ENCODE measurements at regions of chr1 and their contacts with region 1.

Region 1: GRCh38 chr1:241611063-241611462 is 29.1 kb downstream of the CHML start:
- DNase-seq: peak in 7 of 9 donors; percentile 34 to 72 (median 59)
- ATAC-seq: peak; percentile 87
- H3K4me3 ChIP-seq: no peak overlapping the region
- H3K4me3 Mint-ChIP-seq: no peak overlapping the region
- H3K27ac ChIP-seq: no peak overlapping the region
- H3K27ac Mint-ChIP-seq: no peak overlapping the region
- H3K4me1 ChIP-seq: peaks cover 0 to 3% of the 10 kb centered on the region in 2 donors
- H3K4me1 Mint-ChIP-seq: peaks cover 0 to 6% (median 0%) of the 10 kb centered on the region in 7 donors
- H3K27me3 ChIP-seq: no peaks in the 10 kb centered on the region
- H3K27me3 Mint-ChIP-seq: no peaks in the 10 kb centered on the region

Region 2: DNA sequence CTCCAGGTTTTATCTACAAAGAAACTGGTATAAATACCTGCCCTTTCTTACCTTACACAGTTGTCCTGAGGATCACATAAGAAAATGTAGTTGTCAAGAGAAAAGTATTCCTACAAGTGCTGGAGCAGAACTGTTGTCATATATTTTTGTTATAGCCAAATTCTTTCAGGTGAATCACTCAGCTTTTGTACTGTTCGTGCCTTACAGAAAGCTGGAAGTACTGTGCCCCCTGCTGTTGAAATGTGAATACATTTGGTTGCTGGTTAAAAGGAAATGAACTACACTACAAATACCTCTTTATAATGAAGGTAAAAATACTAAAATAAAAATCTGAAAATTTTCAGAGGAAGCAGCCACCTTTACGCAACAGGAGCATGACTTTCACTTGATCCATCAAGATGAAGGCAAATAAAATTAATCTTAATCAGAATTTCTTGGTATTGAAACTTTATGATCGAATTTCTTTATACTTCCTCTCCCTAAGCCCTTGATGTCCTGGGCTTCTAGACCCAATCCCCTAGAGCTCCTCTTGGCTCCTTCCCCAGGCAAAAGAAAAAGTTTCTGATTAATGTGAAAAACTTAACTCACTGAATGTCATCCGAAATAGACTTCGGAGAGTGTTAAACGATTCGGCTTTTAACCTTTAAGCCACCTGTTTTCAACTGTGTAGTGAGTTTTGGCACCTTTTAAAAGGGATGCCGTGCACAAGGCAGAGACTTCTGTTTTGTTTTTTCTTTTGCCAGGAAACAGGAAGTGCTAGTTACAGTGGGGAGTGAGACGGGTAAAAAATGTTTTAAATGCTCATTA is 16.6 kb after region 1 on chr1:
- CTCF ChIA-PET with region 1: interaction called, 49 read pairs
- POLR2A ChIA-PET with region 1: interaction called, 4 read pairs
- intact Hi-C with region 1: loop called (anchors 1 to 2 kb)
- DNase-seq: peak in 7 of 9 donors; percentile 59 to 81 (median 72)
- ATAC-seq: peak; percentile 90
- H3K4me3 ChIP-seq: peak overlapping the region; percentile 37
- H3K4me3 Mint-ChIP-seq: peak overlapping the region; percentile 55 to 87 (median 84)
- H3K27ac ChIP-seq: peak overlapping the region; percentile 70
- H3K27ac Mint-ChIP-seq: peak overlapping the region; percentile 87 to 96 (median 92)
- H3K4me1 ChIP-seq: peaks cover 0 to 9% of the 10 kb centered on the region in 2 donors
- H3K4me1 Mint-ChIP-seq: peaks cover 6 to 33% (median 25%) of the 10 kb centered on the region in 7 donors
- H3K27me3 ChIP-seq: no peaks in the 10 kb centered on the region
- H3K27me3 Mint-ChIP-seq: no peaks in the 10 kb centered on the region

Region 3: DNA sequence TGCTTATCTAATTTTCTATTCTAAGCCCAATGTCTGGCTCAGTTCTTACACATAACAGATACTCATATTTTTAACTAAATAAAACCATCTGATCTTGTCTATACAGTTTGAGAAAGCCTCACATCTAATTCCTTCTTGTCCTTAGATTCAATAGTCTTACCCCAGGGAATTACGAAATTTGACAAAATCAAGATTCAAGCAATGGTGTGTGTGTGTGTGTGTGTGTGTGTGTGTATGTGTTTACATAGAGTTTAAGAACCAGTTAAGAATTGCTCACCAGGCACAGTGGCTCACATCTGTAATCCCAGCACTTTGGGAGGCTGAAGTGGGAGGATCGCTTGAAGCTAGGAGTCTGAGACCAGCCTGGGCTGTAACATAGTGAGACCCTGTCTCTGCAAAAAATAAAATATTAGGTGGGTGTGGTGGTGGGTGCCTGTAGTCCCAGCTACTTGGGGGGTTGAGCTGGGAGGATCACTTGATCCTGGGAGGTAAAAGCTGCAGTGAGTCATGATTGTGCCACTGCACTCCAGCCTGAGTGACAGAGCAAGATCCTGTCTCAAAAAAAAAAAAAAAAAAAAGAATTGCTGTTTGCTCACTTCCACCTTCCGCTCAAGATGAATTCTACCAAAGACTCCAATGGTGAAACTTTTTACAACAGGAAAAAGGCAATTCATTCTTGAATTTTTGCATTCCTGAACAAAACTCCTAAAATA is 47.2 kb after region 1 on chr1:
- CTCF ChIA-PET with region 1: no interaction called
- POLR2A ChIA-PET with region 1: no interaction called
- intact Hi-C with region 1: no loop called
- DNase-seq: no peak
- ATAC-seq: no peak
- H3K4me3 ChIP-seq: no peak overlapping the region
- H3K4me3 Mint-ChIP-seq: no peak overlapping the region
- H3K27ac ChIP-seq: no peak overlapping the region
- H3K27ac Mint-ChIP-seq: no peak overlapping the region
- H3K4me1 ChIP-seq: no peaks in the 10 kb centered on the region
- H3K4me1 Mint-ChIP-seq: no peaks in the 10 kb centered on the region
- H3K27me3 ChIP-seq: no peaks in the 10 kb centered on the region
- H3K27me3 Mint-ChIP-seq: peaks cover 0 to 10% (median 0%) of the 10 kb centered on the region in 5 donors

Region 4: DNA sequence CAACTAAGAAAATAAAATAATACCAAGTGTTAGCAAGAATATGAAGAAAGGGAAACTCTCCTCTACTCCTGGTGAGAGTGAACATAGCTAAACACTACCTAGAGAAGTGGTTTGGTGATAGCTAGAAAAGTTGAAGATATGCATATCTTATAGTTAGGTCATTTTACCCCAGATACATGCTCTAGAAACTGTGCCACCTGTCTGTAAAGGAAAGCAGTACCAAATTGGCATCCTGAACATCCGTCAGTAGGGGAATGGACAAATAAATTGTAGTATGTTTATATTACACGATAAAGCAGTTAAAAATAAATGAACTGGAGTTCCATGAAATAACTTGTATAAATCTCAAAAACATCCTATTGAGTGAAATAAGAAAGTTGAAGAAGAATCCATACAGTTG is 145.5 kb after region 1 on chr1:
- CTCF ChIA-PET with region 1: interaction called, 3 read pairs
- POLR2A ChIA-PET with region 1: no interaction called
- intact Hi-C with region 1: loop called in 1 of 2 experiments (anchors 2 kb)
- DNase-seq: peak in 1 of 9 donors; percentile 5
- ATAC-seq: no peak
- H3K4me3 ChIP-seq: no peak overlapping the region
- H3K4me3 Mint-ChIP-seq: no peak overlapping the region
- H3K27ac ChIP-seq: no peak overlapping the region
- H3K27ac Mint-ChIP-seq: no peak overlapping the region
- H3K4me1 ChIP-seq: no peaks in the 10 kb centered on the region
- H3K4me1 Mint-ChIP-seq: no peaks in the 10 kb centered on the region
- H3K27me3 ChIP-seq: no peaks in the 10 kb centered on the region
- H3K27me3 Mint-ChIP-seq: peaks cover 0 to 2% (median under 1%) of the 10 kb centered on the region in 5 donors

Region 5: GRCh38 chr1:241847796-241848685 is 237.0 kb after region 1 on chr1 and contains the start of gene EXO1:
- CTCF ChIA-PET with region 1: interaction called, 4 read pairs
- POLR2A ChIA-PET with region 1: no interaction called
- intact Hi-C with region 1: loop called in 1 of 2 experiments (anchors 2 kb)
- DNase-seq: peak; percentile 84 to 92 (median 89)
- ATAC-seq: peak; percentile 99
- H3K4me3 ChIP-seq: peak within 1 kb of the TSS; percentile 96
- H3K4me3 Mint-ChIP-seq: peak within 1 kb of the TSS; percentile 87 to 99 (median 96)
- H3K27ac ChIP-seq: peak within 1 kb of the TSS; percentile 96
- H3K27ac Mint-ChIP-seq: peak within 1 kb of the TSS; percentile 95 to 99 (median 99)
- H3K4me1 ChIP-seq: peaks cover 6 to 12% of the 10 kb centered on the region in 2 donors
- H3K4me1 Mint-ChIP-seq: peaks cover 7 to 42% (median 17%) of the 10 kb centered on the region in 7 donors
- H3K27me3 ChIP-seq: no peaks in the 10 kb centered on the region
- H3K27me3 Mint-ChIP-seq: peaks cover 0 to 8% (median 0%) of the 10 kb centered on the region in 5 donors
- total RNA-seq, gene EXO1: 0.11 to 29.8 (median 1.0) TPM

Region 6: GRCh38 chr1:241998412-241998921 is 387.4 kb after region 1 on chr1:
- CTCF ChIA-PET with region 1: interaction called, 35 read pairs
- POLR2A ChIA-PET with region 1: no interaction called
- intact Hi-C with region 1: loop called (anchors 1 to 2 kb)
- DNase-seq: peak; percentile 10 to 53 (median 30)
- ATAC-seq: peak; percentile 69
- H3K4me3 ChIP-seq: peak overlapping the region; percentile 39
- H3K4me3 Mint-ChIP-seq: peak overlapping the region; percentile 16 to 68 (median 61)
- H3K27ac ChIP-seq: no peak overlapping the region
- H3K27ac Mint-ChIP-seq: no peak overlapping the region
- H3K4me1 ChIP-seq: no peaks in the 10 kb centered on the region
- H3K4me1 Mint-ChIP-seq: peaks cover 0 to 7% (median 5%) of the 10 kb centered on the region in 7 donors
- H3K27me3 ChIP-seq: peaks cover 0 to 3% of the 10 kb centered on the region in 2 donors
- H3K27me3 Mint-ChIP-seq: peaks cover 0 to 6% (median 4%) of the 10 kb centered on the region in 5 donors

Region 7: DNA sequence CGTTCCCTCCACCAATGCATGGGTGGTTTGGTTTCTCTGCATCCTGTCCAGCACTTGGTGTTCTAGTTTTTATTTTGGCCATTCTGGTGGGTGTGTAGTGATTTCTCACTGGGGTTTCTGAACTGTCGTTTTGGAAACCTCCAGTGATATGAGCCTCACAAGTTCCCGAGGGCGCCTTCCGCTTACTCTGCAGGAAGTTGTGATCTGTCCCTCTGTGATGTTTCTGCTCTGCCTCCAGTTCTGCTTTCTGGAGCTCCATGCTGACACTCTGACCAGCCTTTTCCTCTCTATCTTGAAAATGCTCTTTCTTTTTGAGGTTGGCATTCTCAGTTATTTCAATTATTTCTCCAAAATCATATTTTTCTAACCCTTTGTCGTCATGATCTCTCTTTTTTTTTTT is 801.9 kb after region 1 on chr1:
- CTCF ChIA-PET with region 1: no interaction called
- POLR2A ChIA-PET with region 1: no interaction called
- intact Hi-C with region 1: no loop called
- DNase-seq: no peak
- ATAC-seq: no peak
- H3K4me3 ChIP-seq: no peak overlapping the region
- H3K4me3 Mint-ChIP-seq: no peak overlapping the region
- H3K27ac ChIP-seq: no peak overlapping the region
- H3K27ac Mint-ChIP-seq: no peak overlapping the region
- H3K4me1 ChIP-seq: no peaks in the 10 kb centered on the region
- H3K4me1 Mint-ChIP-seq: peaks cover 0 to 2% (median 0%) of the 10 kb centered on the region in 7 donors
- H3K27me3 ChIP-seq: no peaks in the 10 kb centered on the region
- H3K27me3 Mint-ChIP-seq: peaks cover 0 to 7% (median 0%) of the 10 kb centered on the region in 5 donors

Region 8: GRCh38 chr1:242454262-242455045 is 843.4 kb after region 1 on chr1:
- CTCF ChIA-PET with region 1: interaction called, 3 read pairs
- POLR2A ChIA-PET with region 1: no interaction called
- intact Hi-C with region 1: loop called in 1 of 2 experiments (anchors 5 kb)
- DNase-seq: no peak
- ATAC-seq: no peak
- H3K4me3 ChIP-seq: no peak overlapping the region
- H3K4me3 Mint-ChIP-seq: no peak overlapping the region
- H3K27ac ChIP-seq: no peak overlapping the region
- H3K27ac Mint-ChIP-seq: no peak overlapping the region
- H3K4me1 ChIP-seq: no peaks in the 10 kb centered on the region
- H3K4me1 Mint-ChIP-seq: no peaks in the 10 kb centered on the region
- H3K27me3 ChIP-seq: no peaks in the 10 kb centered on the region
- H3K27me3 Mint-ChIP-seq: peaks cover 1 to 41% (median 24%) of the 10 kb centered on the region in 5 donors

Measured in naive thymus-derived CD4-positive, alpha-beta T cell (primary cell).